ENCODE measurements at regions of chr13 and their contacts with region 1.

Region 1: GRCh38 chr13:19959831-19960652 is 1.5 kb downstream of the ZMYM2 start:
- DNase-seq: peak; percentile 88 to 92
- H3K4me3 ChIP-seq: peak overlapping the region; percentile 93 to 94
- H3K27ac ChIP-seq: peak overlapping the region; percentile 96 to 99
- H3K4me1 ChIP-seq: peaks cover 0 to 51% (median 25%) of the 10 kb centered on the region in 4 donors
- H3K27me3 ChIP-seq: no peaks in the 10 kb centered on the region
- CTCF ChIP-seq: peak; percentile 88 to 97

Region 2: DNA sequence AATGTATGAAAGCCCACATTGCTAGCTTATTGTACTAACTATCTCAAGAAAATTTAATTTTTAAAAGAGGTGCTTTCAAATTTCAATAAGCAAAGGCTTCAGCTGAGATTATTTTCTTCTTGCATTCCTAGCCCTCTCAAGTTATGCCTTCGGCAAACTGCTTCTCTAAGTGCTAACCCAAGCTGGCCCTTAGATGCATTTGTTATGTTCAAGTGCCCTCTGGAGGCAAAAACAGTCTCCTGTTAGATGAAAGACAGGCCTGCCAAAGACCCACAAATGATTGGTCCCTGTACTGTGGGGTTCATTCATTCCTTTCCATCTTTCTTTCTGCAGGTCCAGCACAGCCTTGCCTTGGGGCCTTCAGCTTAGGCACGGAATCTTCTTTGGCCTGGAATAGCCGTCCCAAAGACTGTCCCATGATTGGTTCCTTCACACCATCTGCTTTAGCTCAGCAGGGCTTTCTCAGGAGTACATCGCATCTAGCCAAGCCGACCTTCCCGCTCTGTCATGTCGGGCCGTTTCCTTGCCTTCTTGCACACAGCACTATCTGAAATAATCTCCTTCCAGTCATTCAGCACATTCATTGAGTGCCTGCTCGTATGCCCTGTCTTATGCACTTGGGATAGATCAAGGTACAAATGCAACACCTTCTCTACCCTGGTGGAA is 372.3 kb before region 1 on chr13:
- intact Hi-C with region 1: no loop called
- DNase-seq: no peak
- H3K4me3 ChIP-seq: no peak overlapping the region
- H3K27ac ChIP-seq: no peak overlapping the region
- H3K4me1 ChIP-seq: no peaks in the 10 kb centered on the region
- H3K27me3 ChIP-seq: no peaks in the 10 kb centered on the region
- CTCF ChIP-seq: peak; percentile 18 to 29

Region 3: DNA sequence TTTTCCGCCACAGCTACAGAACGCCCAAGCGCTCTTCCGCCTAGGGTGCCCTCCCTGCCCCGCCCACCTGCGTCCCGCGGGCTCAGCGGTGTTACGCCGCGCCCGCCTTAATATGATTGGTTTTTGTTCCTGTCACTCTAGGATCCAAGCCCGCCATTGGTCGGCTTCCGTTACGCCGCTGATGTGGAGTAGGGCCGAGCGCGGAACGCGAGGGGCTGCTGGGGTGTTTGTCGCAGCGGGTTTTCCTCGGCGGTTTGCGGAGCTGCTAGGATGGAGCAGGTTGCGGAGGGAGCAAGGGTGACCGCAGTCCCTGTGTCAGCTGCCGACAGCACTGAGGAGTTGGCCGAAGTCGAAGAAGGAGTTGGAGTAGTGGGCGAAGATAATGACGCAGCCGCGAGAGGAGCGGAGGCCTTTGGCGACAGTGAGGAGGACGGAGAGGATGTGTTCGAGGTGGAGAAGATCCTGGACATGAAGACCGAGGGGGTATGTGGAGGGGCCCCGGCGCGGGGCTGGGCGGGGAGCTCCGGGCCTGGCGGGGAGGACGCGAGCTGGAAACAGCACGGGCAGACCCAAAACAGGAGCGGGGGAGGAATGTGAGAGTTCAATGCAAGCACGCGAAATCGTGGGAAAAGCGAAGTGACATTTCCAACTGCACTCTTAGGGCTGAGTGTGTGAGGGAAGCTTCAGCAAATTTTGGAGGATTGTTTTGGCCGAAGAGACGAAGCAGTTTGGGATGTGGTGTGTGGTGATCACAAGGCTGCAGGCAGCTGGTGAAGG is 326.4 kb before region 1 on chr13 and contains the start of gene MPHOSPH8:
- intact Hi-C with region 1: loop called (anchors 10 kb)
- DNase-seq: peak; percentile 94 to 97
- H3K4me3 ChIP-seq: peak within 1 kb of the TSS; percentile 78 to 80
- H3K27ac ChIP-seq: peak within 1 kb of the TSS; percentile 92 to 94
- H3K4me1 ChIP-seq: peaks cover 0 to 31% (median 23%) of the 10 kb centered on the region in 4 donors
- H3K27me3 ChIP-seq: no peaks in the 10 kb centered on the region
- CTCF ChIP-seq: no peak